ENCODE measurements at regions of chr16 and their contacts with region 1.

Region 1: DNA sequence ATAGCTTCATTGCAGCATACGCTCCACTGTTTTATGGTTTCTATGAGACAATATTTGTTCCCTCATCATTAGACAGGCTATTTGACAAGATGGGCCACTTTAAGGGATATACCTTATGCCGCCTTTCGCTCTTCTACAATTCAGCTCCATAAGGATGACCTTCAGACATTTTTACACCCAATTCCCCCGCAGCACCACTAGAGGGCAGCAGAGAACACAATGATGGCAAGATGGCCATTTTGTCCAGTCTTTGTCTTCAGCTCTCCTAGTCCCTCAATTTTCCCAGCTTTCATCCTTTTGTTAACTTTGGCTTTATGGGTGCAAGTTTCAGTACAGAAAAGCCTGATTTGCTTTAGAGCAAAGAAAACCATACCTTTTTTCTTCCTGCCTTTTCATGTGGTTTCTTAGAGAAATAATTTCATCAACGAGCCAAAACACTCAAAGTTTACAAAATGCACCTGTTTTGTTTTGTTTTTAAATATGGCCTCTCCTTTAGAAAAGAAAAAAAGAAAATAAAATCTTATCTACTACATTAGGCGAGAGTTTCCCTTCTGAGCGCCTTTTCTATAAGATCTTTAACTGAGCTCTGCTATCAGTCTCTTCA is 355.3 kb downstream of the TOX3 start:
- DNase-seq: peak; percentile 61
- H3K4me3 Mint-ChIP-seq: no peak overlapping the region
- H3K27ac Mint-ChIP-seq: no peak overlapping the region
- H3K4me1 Mint-ChIP-seq: no peaks in the 10 kb centered on the region
- H3K27me3 Mint-ChIP-seq: no peaks in the 10 kb centered on the region

Region 2: DNA sequence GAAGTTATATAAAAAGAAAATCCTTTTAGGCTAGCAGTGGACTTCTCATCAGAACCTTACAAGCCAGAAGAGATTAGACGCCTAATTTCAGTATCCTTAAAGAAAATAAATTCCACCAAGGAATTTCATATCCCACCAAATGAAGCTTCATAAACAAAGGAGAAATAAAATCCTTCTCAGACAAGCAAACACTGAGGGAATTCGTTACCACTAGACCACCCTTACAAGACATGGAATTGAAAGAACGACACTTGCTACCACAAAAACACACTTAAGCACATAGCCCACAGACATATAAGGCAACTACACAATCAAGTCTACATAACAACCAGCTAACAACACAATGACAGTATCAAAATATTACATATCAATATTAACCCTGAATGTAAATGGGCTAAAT is 56.1 kb after region 1 on chr16:
- CTCF ChIA-PET with region 1: no interaction called
- POLR2A ChIA-PET with region 1: no interaction called
- intact Hi-C with region 1: no loop called
- DNase-seq: no peak
- H3K4me3 Mint-ChIP-seq: no peak overlapping the region
- H3K27ac Mint-ChIP-seq: no peak overlapping the region
- H3K4me1 Mint-ChIP-seq: no peaks in the 10 kb centered on the region
- H3K27me3 Mint-ChIP-seq: no peaks in the 10 kb centered on the region

Region 3: DNA sequence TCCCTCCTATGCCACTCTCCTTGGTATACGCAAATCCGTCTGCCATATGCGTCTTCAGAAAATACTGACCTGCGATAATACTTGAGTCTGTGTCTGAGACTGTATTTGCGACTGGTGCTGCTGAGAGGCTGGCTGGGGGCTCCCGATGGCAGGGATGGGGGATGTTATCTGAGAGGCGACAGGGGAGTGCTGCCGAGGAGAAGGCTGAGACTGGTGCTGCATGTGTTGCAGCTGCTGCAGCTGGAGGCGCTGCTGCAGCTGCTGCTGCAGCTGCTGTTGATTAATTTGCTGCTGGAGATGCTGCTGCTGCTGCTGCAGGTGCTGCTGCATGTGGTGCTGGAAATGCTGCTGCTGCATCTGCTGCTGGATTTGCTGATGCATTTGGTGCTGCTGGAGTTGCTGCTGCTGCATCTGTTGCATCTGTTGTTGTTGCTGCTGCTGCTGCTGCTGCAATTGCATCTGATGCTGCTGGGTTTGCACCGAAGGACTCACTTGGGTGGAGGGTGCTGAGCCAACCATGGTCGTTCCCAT is 247.6 kb after region 1 on chr16:
- CTCF ChIA-PET with region 1: no interaction called
- POLR2A ChIA-PET with region 1: no interaction called
- intact Hi-C with region 1: no loop called
- DNase-seq: no peak
- H3K4me3 Mint-ChIP-seq: no peak overlapping the region
- H3K27ac Mint-ChIP-seq: no peak overlapping the region
- H3K4me1 Mint-ChIP-seq: no peaks in the 10 kb centered on the region
- H3K27me3 Mint-ChIP-seq: no peaks in the 10 kb centered on the region

Region 4: DNA sequence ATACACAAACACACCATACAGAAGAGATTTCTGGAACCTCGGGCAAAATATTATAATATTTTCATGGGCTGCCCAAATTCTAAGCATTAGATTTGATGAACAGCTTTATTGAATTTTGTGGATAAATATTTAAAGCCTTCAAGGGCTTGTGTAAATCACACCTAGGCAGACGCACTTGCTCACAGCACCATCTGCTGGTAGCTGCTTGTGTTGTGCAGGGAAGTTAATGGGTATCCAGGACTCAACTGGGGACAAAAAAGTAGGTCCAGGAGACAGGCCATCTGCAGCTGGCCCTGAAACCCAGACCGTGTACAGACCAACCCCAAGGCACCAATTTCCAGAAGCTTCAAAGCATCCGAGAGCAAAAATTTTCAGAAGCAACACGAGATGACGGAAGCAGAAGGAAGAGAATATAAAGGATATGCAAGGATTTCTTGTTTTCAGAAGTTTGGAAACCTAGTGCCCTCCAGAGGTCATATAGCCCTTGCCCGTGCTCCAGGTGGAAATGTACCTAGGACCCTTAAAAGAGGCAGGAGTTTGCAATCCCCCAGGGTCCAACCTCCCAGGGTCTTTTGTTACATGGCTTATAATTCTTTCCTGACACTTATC is 721.0 kb after region 1 on chr16:
- CTCF ChIA-PET with region 1: interaction called, 20 read pairs
- POLR2A ChIA-PET with region 1: no interaction called
- intact Hi-C with region 1: loop called (anchors 1 kb)
- DNase-seq: peak; percentile 48
- H3K4me3 Mint-ChIP-seq: no peak overlapping the region
- H3K27ac Mint-ChIP-seq: no peak overlapping the region
- H3K4me1 Mint-ChIP-seq: no peaks in the 10 kb centered on the region
- H3K27me3 Mint-ChIP-seq: peaks cover 2% of the 10 kb centered on the region

Region 5: GRCh38 chr16:53022374-53022773 is 830.7 kb after region 1 on chr16:
- CTCF ChIA-PET with region 1: interaction called, 28 read pairs
- POLR2A ChIA-PET with region 1: no interaction called
- intact Hi-C with region 1: loop called (anchors 1 kb)
- DNase-seq: peak; percentile 11
- H3K4me3 Mint-ChIP-seq: no peak overlapping the region
- H3K27ac Mint-ChIP-seq: no peak overlapping the region
- H3K4me1 Mint-ChIP-seq: no peaks in the 10 kb centered on the region
- H3K27me3 Mint-ChIP-seq: no peaks in the 10 kb centered on the region